CD8-positive, alpha-beta T cell (primary cell): ENCODE measurements at regions of chr1 and their contacts with region 1.

Region 1: DNA sequence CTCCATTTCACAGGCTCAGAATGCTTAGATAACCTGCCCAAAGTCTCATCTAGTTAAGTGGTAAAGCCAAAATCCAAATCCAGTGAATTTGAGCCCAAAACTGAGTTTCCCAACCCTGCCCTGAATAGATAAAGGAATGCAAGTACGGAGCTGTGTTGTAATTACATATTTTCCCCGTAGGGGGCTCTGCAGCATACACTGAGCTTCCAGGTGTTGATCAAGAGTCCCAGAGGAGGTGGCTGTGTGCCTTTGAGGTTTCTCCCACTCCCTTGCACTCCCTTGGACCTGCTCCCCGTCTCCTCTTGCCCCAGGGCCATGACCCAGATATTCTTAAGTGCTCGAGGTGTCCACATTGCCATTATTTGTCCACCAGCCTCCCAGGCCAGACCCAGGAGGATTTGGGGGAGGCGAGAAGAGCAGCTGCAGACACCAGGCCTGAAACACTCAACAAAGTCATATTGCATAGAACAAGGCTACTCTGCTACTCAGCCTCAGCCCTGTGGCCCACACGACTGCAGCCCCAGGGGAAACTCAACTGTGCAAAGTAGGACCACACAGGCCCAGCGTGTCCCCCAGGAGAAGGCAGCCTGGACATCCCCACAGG is 18.4 kb upstream of the LY9 start:
- DNase-seq: peak in 7 of 9 experiments; percentile 33 to 79 (median 52)
- ATAC-seq: peak; percentile 84
- H3K4me3 ChIP-seq: no peak overlapping the region
- H3K4me3 Mint-ChIP-seq: no peak overlapping the region
- H3K27ac ChIP-seq: no peak overlapping the region
- H3K27ac Mint-ChIP-seq: no peak overlapping the region
- H3K4me1 ChIP-seq: no peaks in the 10 kb centered on the region
- H3K4me1 Mint-ChIP-seq: peaks cover 20% of the 10 kb centered on the region
- H3K27me3 ChIP-seq: no peaks in the 10 kb centered on the region
- H3K27me3 Mint-ChIP-seq: no peaks in the 10 kb centered on the region
- CTCF ChIP-seq: peak; percentile 77

Region 2: GRCh38 chr1:160813215-160813614 is 35.6 kb after region 1 on chr1:
- CTCF ChIA-PET with region 1: interaction called, 7 read pairs
- POLR2A ChIA-PET with region 1: no interaction called
- intact Hi-C with region 1: loop called in 1 of 2 experiments (anchors 5 kb)
- DNase-seq: no peak
- ATAC-seq: peak; percentile 77
- H3K4me3 ChIP-seq: no peak overlapping the region
- H3K4me3 Mint-ChIP-seq: no peak overlapping the region
- H3K27ac ChIP-seq: no peak overlapping the region
- H3K27ac Mint-ChIP-seq: peak overlapping the region; percentile 84
- H3K4me1 ChIP-seq: peaks cover 17% of the 10 kb centered on the region
- H3K4me1 Mint-ChIP-seq: peaks cover 52% of the 10 kb centered on the region
- H3K27me3 ChIP-seq: no peaks in the 10 kb centered on the region
- H3K27me3 Mint-ChIP-seq: no peaks in the 10 kb centered on the region
- CTCF ChIP-seq: no peak

Region 3: DNA sequence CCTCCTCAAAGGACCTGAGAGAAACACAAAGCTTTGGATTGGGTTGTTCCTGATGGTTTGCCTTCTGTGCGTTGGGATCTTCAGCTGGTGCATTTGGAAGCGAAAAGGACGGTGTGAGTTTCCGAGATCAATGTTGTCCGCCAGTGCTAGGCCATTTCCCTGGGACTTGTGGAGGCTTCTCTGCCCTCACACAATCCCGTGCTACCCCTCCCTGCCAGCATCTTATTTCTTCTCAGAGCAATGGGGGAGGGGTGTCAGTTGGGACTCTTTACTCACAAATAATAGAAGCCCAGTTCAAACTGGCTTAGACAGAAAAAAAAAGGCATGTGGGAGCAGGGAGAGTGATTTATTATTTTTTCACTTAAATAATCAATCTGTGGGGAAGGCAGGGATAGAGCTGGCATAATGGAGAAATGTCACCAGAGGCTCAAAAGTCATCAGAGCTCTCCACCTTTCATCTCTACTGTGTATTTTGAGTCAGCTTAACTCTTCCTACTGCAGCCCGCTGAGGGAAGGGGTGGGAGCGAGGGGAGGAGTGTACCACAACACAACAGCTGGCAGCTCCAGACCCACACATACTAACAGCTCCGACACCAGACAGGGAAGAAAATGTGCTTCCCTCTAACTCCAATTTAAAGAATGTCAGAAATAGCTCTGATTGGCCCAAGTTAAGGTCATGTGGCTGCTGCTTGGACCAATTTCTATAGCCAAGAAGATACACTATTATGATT is 40.8 kb after region 1 on chr1:
- CTCF ChIA-PET with region 1: interaction called, 10 read pairs
- POLR2A ChIA-PET with region 1: no interaction called
- intact Hi-C with region 1: loop called in 1 of 2 experiments (anchors 5 kb)
- DNase-seq: no peak
- ATAC-seq: no peak
- H3K4me3 ChIP-seq: no peak overlapping the region
- H3K4me3 Mint-ChIP-seq: no peak overlapping the region
- H3K27ac ChIP-seq: no peak overlapping the region
- H3K27ac Mint-ChIP-seq: peak overlapping the region; percentile 62
- H3K4me1 ChIP-seq: no peaks in the 10 kb centered on the region
- H3K4me1 Mint-ChIP-seq: peaks cover 13% of the 10 kb centered on the region
- H3K27me3 ChIP-seq: no peaks in the 10 kb centered on the region
- H3K27me3 Mint-ChIP-seq: no peaks in the 10 kb centered on the region
- CTCF ChIP-seq: no peak

Region 4: DNA sequence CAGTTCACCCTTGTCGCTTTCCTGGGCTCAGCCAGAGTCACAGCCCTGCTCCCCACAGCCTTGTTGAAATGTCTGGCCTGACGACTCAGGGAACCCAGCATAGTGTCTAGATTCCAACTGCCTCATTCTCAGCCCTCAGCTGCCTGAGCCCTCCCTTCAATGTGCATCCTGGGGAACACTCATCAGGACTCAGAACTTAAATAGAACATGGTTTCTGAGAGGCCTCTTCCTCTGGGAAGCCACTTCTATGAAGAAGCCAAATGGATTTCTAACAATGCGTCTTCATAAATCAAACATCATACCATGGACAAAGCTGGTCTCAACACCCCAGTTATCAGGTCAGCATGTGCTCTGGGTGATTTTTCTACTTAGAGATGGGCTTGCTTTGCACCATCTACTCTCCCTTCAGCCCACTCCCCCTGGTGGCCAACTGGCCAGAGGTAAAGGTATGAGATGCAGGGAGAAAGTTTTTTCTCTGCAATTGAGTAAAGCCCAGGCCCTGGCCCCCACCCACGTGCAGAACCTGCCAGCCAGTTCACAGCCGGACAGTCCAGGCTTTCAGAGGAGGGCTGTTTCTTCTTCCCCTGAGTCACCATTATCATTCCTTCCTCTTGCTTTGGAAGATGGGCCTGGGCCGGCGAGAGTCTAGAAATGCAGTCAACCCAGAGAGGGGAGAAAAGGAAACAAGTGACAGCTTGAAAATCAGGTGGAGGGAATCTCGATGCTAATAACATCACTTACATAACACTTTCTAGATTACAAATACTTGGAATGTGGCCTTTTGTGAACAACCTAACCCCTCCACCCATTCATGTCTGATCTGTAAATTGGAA is 52.9 kb after region 1 on chr1:
- CTCF ChIA-PET with region 1: interaction called, 134 read pairs
- POLR2A ChIA-PET with region 1: interaction called, 11 read pairs
- intact Hi-C with region 1: loop called (anchors 1 kb)
- DNase-seq: peak; percentile 52 to 87 (median 80)
- ATAC-seq: peak; percentile 70
- H3K4me3 ChIP-seq: no peak overlapping the region
- H3K4me3 Mint-ChIP-seq: no peak overlapping the region
- H3K27ac ChIP-seq: peak overlapping the region in 1 of 2 experiments; percentile 15
- H3K27ac Mint-ChIP-seq: peak overlapping the region; percentile 86
- H3K4me1 ChIP-seq: peaks cover 25% of the 10 kb centered on the region
- H3K4me1 Mint-ChIP-seq: peaks cover 58% of the 10 kb centered on the region
- H3K27me3 ChIP-seq: no peaks in the 10 kb centered on the region
- H3K27me3 Mint-ChIP-seq: no peaks in the 10 kb centered on the region
- CTCF ChIP-seq: peak; percentile 73

Region 5: GRCh38 chr1:160971618-160972056 is 194.0 kb after region 1 on chr1:
- CTCF ChIA-PET with region 1: no interaction called
- POLR2A ChIA-PET with region 1: no interaction called
- intact Hi-C with region 1: no loop called
- DNase-seq: no peak
- ATAC-seq: no peak
- H3K4me3 ChIP-seq: no peak overlapping the region
- H3K4me3 Mint-ChIP-seq: no peak overlapping the region
- H3K27ac ChIP-seq: no peak overlapping the region
- H3K27ac Mint-ChIP-seq: no peak overlapping the region
- H3K4me1 ChIP-seq: no peaks in the 10 kb centered on the region
- H3K4me1 Mint-ChIP-seq: no peaks in the 10 kb centered on the region
- H3K27me3 ChIP-seq: no peaks in the 10 kb centered on the region
- H3K27me3 Mint-ChIP-seq: peaks cover 4% of the 10 kb centered on the region
- CTCF ChIP-seq: no peak